Activated T-helper 1 cell treated with anti-CD3 and anti-CD28 coated beads, Interleukin-12 subunit alpha, Interleukin-12 subunit beta, Interleukin-2, Interleukin-4 antibody, amounts not matched to agents 30 ng/mL and 10 ng/mL and 1 ng/mL, durations not matched to agents 14 hours and 24 hours and 36 hours (primary cell): ENCODE measurements at regions of chr14 and their contacts with region 1.

Region 1: GRCh38 chr14:65003394-65003793 is 16.7 kb downstream of the FNTB start:
- DNase-seq: no peak
- H3K4me3 Mint-ChIP-seq: no peak overlapping the region
- H3K27ac Mint-ChIP-seq: peak overlapping the region; percentile 79
- H3K4me1 Mint-ChIP-seq: peaks cover 39% of the 10 kb centered on the region
- H3K27me3 Mint-ChIP-seq: no peaks in the 10 kb centered on the region

Region 2: GRCh38 chr14:65102441-65103149 is 99.2 kb after region 1 on chr14 and contains the start of gene MAX:
- intact Hi-C with region 1: loop called (anchors 1 kb)
- DNase-seq: peak; percentile 98
- H3K4me3 Mint-ChIP-seq: peak within 1 kb of the TSS; percentile 95
- H3K27ac Mint-ChIP-seq: peak within 1 kb of the TSS; percentile 95
- H3K4me1 Mint-ChIP-seq: peaks cover 33% of the 10 kb centered on the region
- H3K27me3 Mint-ChIP-seq: peaks cover 6% of the 10 kb centered on the region
- total RNA-seq, gene MAX: 135 and 137 TPM in 2 replicates